Endothelial cell of umbilical vein (primary cell): ENCODE measurements at regions of chr5 and their contacts with region 1.

Region 1: GRCh38 chr5:77560677-77561263 is 68.7 kb upstream of the WDR41 start:
- DNase-seq: peak; percentile 58
- H3K4me3 ChIP-seq: no peak overlapping the region
- H3K27ac ChIP-seq: no peak overlapping the region
- H3K4me1 ChIP-seq: no peaks in the 10 kb centered on the region
- H3K27me3 ChIP-seq: peaks cover 8 to 35% of the 10 kb centered on the region in 2 experiments
- CTCF ChIP-seq: peak; percentile 22 to 46
- POLR2A ChIP-seq: no peak

Region 2: GRCh38 chr5:77798456-77798855 is 237.7 kb after region 1 on chr5:
- CTCF ChIA-PET with region 1: no interaction called
- POLR2A ChIA-PET with region 1: no interaction called
- dilution Hi-C with region 1: no loop called
- intact Hi-C with region 1: no loop called
- DNase-seq: no peak
- H3K4me3 ChIP-seq: no peak overlapping the region
- H3K27ac ChIP-seq: no peak overlapping the region
- H3K4me1 ChIP-seq: peaks cover 2% of the 10 kb centered on the region
- H3K27me3 ChIP-seq: peaks cover 18 to 44% of the 10 kb centered on the region in 2 experiments
- CTCF ChIP-seq: no peak
- POLR2A ChIP-seq: no peak

Region 3: GRCh38 chr5:78008356-78008967 is 447.7 kb after region 1 on chr5:
- CTCF ChIA-PET with region 1: interaction called, 10 read pairs
- POLR2A ChIA-PET with region 1: no interaction called
- dilution Hi-C with region 1: no loop called
- intact Hi-C with region 1: loop called (anchors 1 kb)
- DNase-seq: peak; percentile 53
- H3K4me3 ChIP-seq: no peak overlapping the region
- H3K27ac ChIP-seq: no peak overlapping the region
- H3K4me1 ChIP-seq: no peaks in the 10 kb centered on the region
- H3K27me3 ChIP-seq: no peaks in the 10 kb centered on the region
- CTCF ChIP-seq: peak; percentile 61 to 62
- POLR2A ChIP-seq: no peak

Region 4: DNA sequence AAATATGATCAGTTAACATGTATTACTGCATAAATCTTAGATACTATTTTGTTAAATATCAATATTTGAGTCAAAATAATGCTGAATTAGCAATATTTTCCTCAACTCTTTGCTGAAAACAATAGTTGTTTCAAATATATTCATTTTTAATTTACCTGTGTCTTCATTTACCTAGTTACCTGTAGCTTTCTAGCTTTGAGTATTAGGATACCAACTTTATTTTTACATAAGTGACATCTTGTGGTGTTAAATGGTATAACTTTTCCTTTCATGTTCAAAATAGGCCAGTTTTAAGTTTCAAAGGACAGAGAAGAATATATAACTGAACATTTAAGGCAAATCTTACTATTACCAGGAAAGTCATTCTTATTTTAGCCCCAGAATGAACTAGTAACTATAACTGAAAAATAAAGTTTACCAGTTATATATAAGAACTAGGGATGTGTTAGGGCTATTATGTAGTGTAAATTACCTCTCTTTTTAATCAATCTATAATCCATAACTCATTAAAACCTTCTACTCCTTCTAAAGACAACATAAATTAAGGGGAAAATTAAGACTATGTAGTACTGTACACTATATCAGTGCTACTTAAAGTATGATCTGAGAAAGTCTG is 708.4 kb after region 1 on chr5:
- CTCF ChIA-PET with region 1: interaction called, 23 read pairs
- POLR2A ChIA-PET with region 1: no interaction called
- dilution Hi-C with region 1: no loop called
- intact Hi-C with region 1: loop called (anchors 1 kb)
- DNase-seq: peak; percentile 35
- H3K4me3 ChIP-seq: no peak overlapping the region
- H3K27ac ChIP-seq: no peak overlapping the region
- H3K4me1 ChIP-seq: no peaks in the 10 kb centered on the region
- H3K27me3 ChIP-seq: no peaks in the 10 kb centered on the region
- CTCF ChIP-seq: no peak
- POLR2A ChIP-seq: no peak

Region 5: DNA sequence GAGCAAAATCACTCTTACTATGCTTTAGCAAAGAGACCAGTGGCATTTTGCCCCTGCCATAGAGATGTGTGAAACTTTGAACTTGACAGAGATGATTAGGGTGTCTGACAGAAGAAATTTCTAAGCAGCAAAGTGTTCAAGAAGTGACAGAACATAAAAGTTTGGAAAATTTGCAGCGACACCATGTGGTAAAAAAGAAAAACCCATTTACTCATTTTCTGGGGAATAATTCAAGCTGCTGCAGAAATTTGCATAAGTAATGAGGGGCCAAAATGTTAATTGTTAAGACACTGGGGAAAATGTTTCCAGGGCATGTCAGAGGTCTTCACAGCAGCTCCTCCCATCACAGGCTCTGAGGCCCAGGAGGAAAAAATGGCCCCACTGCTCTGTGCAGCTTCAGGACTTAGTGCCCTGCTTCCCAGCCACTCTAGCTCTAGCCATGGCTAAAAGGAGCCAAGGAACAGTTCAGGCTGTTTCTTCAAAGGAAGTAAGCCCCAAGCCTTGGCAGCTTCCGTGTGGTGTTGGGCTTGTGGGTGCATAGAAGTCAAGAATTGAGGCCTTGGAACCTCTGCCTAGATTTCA is 739.8 kb after region 1 on chr5:
- CTCF ChIA-PET with region 1: interaction called, 38 read pairs
- POLR2A ChIA-PET with region 1: no interaction called
- dilution Hi-C with region 1: no loop called
- intact Hi-C with region 1: loop called (anchors 1 kb)
- DNase-seq: no peak
- H3K4me3 ChIP-seq: no peak overlapping the region
- H3K27ac ChIP-seq: no peak overlapping the region
- H3K4me1 ChIP-seq: peaks cover 3% of the 10 kb centered on the region
- H3K27me3 ChIP-seq: peaks cover 2 to 4% of the 10 kb centered on the region in 2 experiments
- CTCF ChIP-seq: peak in 1 of 2 donors; percentile 12
- POLR2A ChIP-seq: no peak